PC-9 (cell line): ENCODE measurements at regions of chr15 and their contacts with region 1.

Region 1: GRCh38 chr15:84992157-84992944 is 10.7 kb downstream of the PDE8A start:
- DNase-seq: peak; percentile 55 to 92
- H3K4me3 ChIP-seq: no peak overlapping the region
- H3K27ac ChIP-seq: peak overlapping the region; percentile 79
- H3K4me1 ChIP-seq: peaks cover 19% of the 10 kb centered on the region
- H3K27me3 ChIP-seq: no peaks in the 10 kb centered on the region
- CTCF ChIP-seq: no peak

Region 2: GRCh38 chr15:84671211-84671610 is 321.1 kb before region 1 on chr15:
- CTCF ChIA-PET with region 1: no interaction called
- POLR2A ChIA-PET with region 1: no interaction called
- intact Hi-C with region 1: no loop called
- DNase-seq: no peak
- H3K4me3 ChIP-seq: no peak overlapping the region
- H3K27ac ChIP-seq: no peak overlapping the region
- H3K4me1 ChIP-seq: no peaks in the 10 kb centered on the region
- H3K27me3 ChIP-seq: no peaks in the 10 kb centered on the region
- CTCF ChIP-seq: no peak

Region 3: DNA sequence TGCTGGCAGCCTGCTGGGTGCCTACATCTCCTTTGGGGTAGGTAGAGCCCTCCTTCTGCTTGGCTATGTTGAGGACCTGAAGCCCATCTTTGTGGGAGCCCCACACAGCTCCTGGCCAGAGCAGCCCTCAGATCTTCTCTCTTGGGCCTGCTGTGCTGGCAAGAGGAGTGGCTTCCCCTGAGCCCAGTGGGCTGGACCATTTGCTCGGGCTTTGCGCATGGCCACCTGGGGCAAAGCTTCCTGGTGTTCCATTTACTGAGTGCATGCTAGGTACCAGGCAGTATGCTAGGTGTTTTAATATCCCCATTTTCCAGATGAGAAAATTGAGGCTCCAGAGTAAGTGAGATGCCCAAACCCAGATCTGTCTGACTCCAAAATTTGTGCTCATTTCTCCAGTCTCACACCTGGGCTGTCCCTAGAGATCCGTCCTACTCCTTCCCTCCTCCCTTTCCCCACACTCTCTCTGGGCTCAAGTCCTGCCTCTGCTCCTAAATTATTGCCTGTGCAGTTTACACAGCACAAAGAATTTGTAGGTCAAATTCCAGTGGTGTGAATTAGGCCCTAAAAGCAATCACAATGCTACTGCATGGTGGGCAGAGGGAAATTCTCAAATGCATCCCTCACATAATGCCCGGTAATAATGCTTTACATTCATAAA is 68.1 kb before region 1 on chr15:
- CTCF ChIA-PET with region 1: interaction called, 14 read pairs
- POLR2A ChIA-PET with region 1: no interaction called
- intact Hi-C with region 1: no loop called
- DNase-seq: peak in 1 of 2 experiments; percentile 45
- H3K4me3 ChIP-seq: no peak overlapping the region
- H3K27ac ChIP-seq: peak overlapping the region; percentile 70
- H3K4me1 ChIP-seq: peaks cover 56% of the 10 kb centered on the region
- H3K27me3 ChIP-seq: no peaks in the 10 kb centered on the region
- CTCF ChIP-seq: no peak

Region 4: DNA sequence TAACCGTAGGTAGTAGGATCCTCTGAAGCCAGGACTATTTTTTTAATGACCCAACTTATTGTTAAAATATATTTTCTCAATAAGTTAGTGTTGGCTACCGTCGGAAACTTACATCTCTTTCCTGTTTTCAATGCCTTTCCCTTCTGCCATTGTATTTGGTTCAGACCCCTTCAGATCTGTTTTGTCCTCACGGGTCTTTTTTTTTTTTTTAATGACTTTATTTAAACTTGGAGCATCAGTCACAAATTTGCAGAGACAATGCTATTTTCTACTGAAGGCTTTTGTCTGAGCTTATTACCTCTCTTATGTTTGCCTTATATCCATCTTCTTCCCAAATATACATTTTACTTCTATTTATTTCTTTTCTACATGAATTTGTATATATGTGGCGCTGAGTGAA is 36.9 kb after region 1 on chr15:
- CTCF ChIA-PET with region 1: interaction called, 13 read pairs
- POLR2A ChIA-PET with region 1: no interaction called
- intact Hi-C with region 1: no loop called
- DNase-seq: no peak
- H3K4me3 ChIP-seq: no peak overlapping the region
- H3K27ac ChIP-seq: no peak overlapping the region
- H3K4me1 ChIP-seq: peaks cover 32% of the 10 kb centered on the region
- H3K27me3 ChIP-seq: no peaks in the 10 kb centered on the region
- CTCF ChIP-seq: no peak